Activated CD4-positive, alpha-beta memory T cell treated with anti-CD3 and anti-CD28 coated beads for 36 hours (primary cell): ENCODE measurements at regions of chr14 and their contacts with region 1.

Region 1: GRCh38 chr14:24605435-24606190 is 3.9 kb downstream of the GZMH start:
- DNase-seq: peak; percentile 78
- H3K4me3 Mint-ChIP-seq: peak overlapping the region; percentile 60
- H3K27ac Mint-ChIP-seq: peak overlapping the region; percentile 81
- H3K4me1 Mint-ChIP-seq: peaks cover 26% of the 10 kb centered on the region
- H3K27me3 Mint-ChIP-seq: peaks cover 3% of the 10 kb centered on the region

Region 2: DNA sequence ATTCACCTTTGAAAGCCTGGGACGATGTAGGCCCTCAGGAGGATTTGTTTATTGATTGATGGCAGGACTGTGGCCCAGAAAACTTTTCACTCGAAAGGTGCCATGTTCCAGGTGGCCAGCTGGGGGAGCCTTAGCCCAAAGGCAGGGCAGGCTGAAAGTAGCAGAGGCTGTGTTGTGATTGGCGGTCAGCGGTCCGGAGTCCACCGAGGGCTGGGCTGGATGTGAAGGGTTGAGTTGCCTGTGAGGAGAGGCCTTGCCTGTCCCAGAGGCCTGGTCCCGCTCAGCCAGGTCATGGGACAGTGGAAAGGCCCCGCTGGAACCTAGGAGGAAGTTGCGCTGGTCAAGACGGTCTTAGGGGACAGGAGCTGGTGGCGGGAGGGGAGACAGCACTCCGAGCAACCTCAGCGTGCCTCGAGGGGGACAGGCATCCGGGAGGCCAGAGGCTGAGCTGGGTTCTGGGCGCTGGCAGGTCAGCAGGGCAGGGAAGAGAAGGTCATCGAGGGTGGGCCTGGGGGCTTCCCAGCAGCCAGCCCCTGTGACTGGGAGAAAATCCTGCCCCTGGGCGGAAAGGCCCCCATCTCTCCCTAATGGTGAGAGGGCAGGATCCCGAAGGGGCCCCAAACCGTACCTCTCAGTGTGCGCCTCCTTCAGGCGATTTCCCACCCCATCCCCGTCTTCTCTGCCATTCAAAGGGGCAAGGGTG is 123.8 kb before region 1 on chr14:
- CTCF ChIA-PET with region 1: interaction called, 8 read pairs
- POLR2A ChIA-PET with region 1: no interaction called
- intact Hi-C with region 1: loop called (anchors 2 kb)
- DNase-seq: peak; percentile 74
- H3K4me3 Mint-ChIP-seq: peak overlapping the region; percentile 60
- H3K27ac Mint-ChIP-seq: no peak overlapping the region
- H3K4me1 Mint-ChIP-seq: peaks cover 21% of the 10 kb centered on the region
- H3K27me3 Mint-ChIP-seq: no peaks in the 10 kb centered on the region

Region 3: GRCh38 chr14:24595073-24595808 is 10.4 kb before region 1 on chr14:
- CTCF ChIA-PET with region 1: interaction called, 10 read pairs
- POLR2A ChIA-PET with region 1: no interaction called
- intact Hi-C with region 1: no loop called
- DNase-seq: no peak
- H3K4me3 Mint-ChIP-seq: no peak overlapping the region
- H3K27ac Mint-ChIP-seq: no peak overlapping the region
- H3K4me1 Mint-ChIP-seq: no peaks in the 10 kb centered on the region
- H3K27me3 Mint-ChIP-seq: peaks cover 8% of the 10 kb centered on the region

Region 4: GRCh38 chr14:24630872-24631477 is 25.4 kb after region 1 on chr14:
- CTCF ChIA-PET with region 1: interaction called, 19 read pairs
- POLR2A ChIA-PET with region 1: interaction called, 5 read pairs
- intact Hi-C with region 1: loop called (anchors 2 kb)
- DNase-seq: no peak
- H3K4me3 Mint-ChIP-seq: peak overlapping the region; percentile 79
- H3K27ac Mint-ChIP-seq: peak overlapping the region; percentile 78
- H3K4me1 Mint-ChIP-seq: peaks cover 9% of the 10 kb centered on the region
- H3K27me3 Mint-ChIP-seq: no peaks in the 10 kb centered on the region

Region 5: GRCh38 chr14:24673534-24674203 is 68.1 kb after region 1 on chr14:
- CTCF ChIA-PET with region 1: interaction called, 36 read pairs
- POLR2A ChIA-PET with region 1: interaction called, 3 read pairs
- intact Hi-C with region 1: no loop called
- DNase-seq: peak; percentile 83
- H3K4me3 Mint-ChIP-seq: peak overlapping the region; percentile 62
- H3K27ac Mint-ChIP-seq: peak overlapping the region; percentile 94
- H3K4me1 Mint-ChIP-seq: peaks cover 79% of the 10 kb centered on the region
- H3K27me3 Mint-ChIP-seq: no peaks in the 10 kb centered on the region

Region 6: DNA sequence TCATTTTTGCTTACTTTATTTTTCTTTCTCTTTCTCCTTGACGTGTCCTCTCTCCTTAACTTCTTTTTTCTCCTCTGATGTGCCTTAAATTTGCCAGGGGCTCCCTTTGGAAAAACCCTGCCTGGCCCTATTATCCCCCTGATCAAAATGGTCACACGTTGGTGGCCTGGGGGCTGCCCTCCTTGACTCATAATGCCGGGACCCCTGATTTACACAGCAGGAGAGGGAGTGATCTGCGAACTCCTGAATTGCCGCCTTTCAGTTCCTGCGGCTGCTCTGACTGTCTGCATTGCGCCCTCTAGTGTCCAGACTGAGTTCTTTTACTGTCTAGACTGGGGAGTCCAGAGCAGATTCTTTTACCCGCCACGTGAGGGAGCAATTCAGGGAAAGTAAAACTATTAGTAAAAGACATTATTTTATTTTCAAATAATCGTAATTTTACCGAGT is 73.2 kb after region 1 on chr14:
- CTCF ChIA-PET with region 1: interaction called, 36 read pairs
- POLR2A ChIA-PET with region 1: interaction called, 3 read pairs
- intact Hi-C with region 1: loop called (anchors 1 kb)
- DNase-seq: peak; percentile 81
- H3K4me3 Mint-ChIP-seq: peak overlapping the region; percentile 63
- H3K27ac Mint-ChIP-seq: peak overlapping the region; percentile 72
- H3K4me1 Mint-ChIP-seq: peaks cover 50% of the 10 kb centered on the region
- H3K27me3 Mint-ChIP-seq: no peaks in the 10 kb centered on the region

Region 7: DNA sequence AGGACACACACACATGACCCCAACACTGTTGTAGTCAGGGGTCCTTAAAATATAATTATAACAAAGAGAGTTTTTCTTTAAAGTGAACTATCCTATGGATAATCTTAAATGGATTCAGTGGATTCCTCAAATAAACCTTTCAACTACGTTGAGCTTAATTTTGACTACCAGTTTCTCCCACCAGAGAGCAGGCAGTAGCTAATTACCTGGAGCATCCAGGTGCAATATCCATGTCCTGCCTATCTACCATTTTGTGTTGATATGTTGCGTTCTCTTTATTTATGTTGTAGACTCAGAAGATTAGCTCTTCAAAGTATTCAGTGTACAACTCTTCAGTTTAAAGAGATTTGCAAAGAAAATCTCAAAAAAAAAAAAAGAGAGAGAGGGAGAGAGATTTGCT is 155.5 kb after region 1 on chr14:
- CTCF ChIA-PET with region 1: no interaction called
- POLR2A ChIA-PET with region 1: no interaction called
- intact Hi-C with region 1: no loop called
- DNase-seq: no peak
- H3K4me3 Mint-ChIP-seq: no peak overlapping the region
- H3K27ac Mint-ChIP-seq: no peak overlapping the region
- H3K4me1 Mint-ChIP-seq: no peaks in the 10 kb centered on the region
- H3K27me3 Mint-ChIP-seq: peaks cover 18% of the 10 kb centered on the region

Region 8: DNA sequence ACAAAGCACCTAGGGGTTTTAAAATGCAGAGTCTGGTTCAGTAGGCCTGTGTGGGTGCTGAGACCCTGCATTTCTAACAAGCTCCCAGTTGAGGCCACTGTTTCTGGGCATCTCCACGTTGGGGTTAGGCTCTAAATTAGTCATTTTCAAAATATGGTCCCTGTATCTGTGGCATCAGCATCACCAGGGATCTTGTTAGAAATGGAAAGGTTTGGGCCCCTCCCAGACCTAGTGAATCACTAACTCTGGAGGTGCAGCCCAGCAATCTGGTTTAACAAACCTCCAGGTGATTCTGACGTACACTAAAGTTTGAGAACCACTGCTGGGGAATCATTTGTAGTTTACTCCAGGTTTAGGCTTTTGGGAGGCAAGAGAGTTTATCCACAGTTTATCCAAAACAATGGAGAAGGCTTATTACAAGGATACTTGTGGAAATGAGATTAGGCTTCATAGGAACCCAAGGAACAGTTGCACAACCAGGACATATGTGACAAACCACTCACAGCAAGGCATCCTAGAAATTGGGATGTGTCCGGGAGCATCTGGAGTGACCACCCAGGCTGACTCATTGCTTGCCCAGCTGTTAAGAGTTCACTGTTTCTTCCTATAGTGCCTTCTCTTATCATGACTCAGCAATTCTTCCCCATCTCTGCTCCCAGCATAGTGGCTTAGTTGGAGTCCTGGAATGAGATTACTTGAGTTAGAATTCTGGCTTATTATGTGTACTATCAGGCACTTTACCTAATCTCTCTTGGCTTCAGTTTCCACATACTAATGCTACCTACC is 515.9 kb after region 1 on chr14:
- CTCF ChIA-PET with region 1: no interaction called
- POLR2A ChIA-PET with region 1: no interaction called
- intact Hi-C with region 1: loop called (anchors 10 kb)
- DNase-seq: no peak
- H3K4me3 Mint-ChIP-seq: no peak overlapping the region
- H3K27ac Mint-ChIP-seq: no peak overlapping the region
- H3K4me1 Mint-ChIP-seq: no peaks in the 10 kb centered on the region
- H3K27me3 Mint-ChIP-seq: peaks cover 2% of the 10 kb centered on the region